ENCODE measurements at regions of chr6 and their contacts with region 1.

Region 1: DNA sequence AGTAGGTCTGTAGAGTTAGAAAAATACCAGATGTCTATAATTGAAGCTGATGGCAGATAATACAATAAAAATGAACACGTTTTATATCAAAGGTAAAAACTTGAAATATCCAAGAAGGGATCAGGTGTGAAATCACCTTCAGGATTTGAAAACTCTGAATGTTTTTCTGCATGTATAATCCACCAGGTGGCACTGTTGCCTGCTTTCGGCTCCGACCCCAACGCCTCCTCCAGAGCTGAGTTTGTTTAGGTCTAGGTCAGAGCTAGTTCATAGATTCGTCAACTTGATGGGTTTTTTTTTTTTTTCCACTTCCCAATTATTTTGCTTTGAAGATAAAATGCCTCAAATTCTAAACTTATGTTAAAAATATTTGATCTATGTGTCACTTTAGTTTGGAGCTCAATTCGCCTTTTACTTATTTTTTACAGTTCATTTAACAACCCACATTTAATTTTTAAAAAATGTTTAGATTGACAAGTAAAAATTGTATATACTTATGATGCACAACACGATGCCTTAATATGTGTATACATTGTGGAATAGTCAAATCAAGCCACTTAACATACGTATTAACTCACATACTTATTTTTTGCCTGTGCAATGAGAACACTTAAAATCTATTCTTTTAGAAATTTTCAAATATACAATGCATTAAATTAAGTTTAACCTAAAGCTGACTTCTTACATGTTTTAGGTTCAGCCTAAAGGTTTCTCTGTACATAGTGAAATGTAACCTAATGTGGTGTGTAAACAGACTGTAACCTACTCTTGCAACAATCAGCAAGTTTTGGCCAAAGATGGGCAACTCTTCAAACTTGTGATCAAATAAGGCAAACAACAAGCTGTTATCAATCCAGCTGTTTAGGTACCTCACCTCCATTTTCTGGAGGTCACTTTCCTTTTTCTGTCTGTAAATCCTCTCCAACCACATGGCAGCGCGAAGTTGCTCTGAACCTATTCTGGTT is 39.4 kb upstream of the ENPP4 start:
- DNase-seq: peak; percentile 24
- H3K4me3 Mint-ChIP-seq: no peak overlapping the region
- H3K27ac Mint-ChIP-seq: no peak overlapping the region
- H3K4me1 Mint-ChIP-seq: peaks cover 1% of the 10 kb centered on the region
- H3K27me3 Mint-ChIP-seq: peaks cover 32% of the 10 kb centered on the region

Region 2: GRCh38 chr6:45930420-45931040 is 159.9 kb before region 1 on chr6:
- intact Hi-C with region 1: loop called (anchors 10 kb)
- DNase-seq: peak; percentile 33
- H3K4me3 Mint-ChIP-seq: no peak overlapping the region
- H3K27ac Mint-ChIP-seq: no peak overlapping the region
- H3K4me1 Mint-ChIP-seq: peaks cover 23% of the 10 kb centered on the region
- H3K27me3 Mint-ChIP-seq: no peaks in the 10 kb centered on the region

Region 3: DNA sequence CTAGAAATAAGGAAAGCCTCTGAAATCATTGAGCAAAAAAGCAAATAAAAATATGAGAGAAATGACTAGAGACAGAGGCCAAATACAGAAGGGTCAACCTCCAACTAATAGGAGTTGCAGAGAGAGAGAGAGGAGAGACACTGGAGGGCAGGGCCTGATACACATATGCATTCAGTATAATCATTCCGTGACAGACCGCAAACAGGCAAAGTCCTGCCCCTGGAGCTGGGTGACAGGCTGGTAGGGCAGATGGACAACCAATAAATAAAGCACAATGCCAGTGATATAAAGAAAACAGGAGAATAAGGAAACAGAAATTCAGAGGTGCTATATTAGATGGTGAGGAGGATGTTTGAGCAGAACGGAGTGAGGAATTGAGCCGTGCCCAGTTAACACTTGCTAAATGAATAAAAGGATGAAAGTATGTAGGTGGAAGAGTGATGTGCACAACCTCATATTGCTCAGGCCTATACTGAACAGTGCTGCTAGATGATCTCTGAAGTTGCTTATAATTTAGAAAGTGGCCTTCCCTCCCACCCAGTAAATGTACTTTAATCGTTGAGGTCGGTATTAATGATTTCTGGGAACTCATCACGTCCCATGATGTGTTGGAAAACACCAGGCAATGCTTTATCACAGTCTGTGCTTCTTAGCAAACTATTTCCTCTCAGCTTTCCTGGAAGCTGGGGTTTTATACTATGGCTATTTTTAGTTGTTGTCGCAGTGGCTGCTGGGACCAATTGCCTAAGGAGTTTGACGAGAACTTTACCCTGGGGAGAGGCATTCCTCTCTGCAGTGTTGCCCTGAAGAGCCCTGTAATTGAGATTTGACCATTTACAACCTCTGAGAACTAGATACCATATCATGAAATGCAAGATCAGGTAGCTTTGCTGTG is 37.1 kb before region 1 on chr6:
- intact Hi-C with region 1: no loop called
- DNase-seq: no peak
- H3K4me3 Mint-ChIP-seq: no peak overlapping the region
- H3K27ac Mint-ChIP-seq: peak overlapping the region; percentile 50
- H3K4me1 Mint-ChIP-seq: peaks cover 14% of the 10 kb centered on the region
- H3K27me3 Mint-ChIP-seq: peaks cover 23% of the 10 kb centered on the region

Region 4: DNA sequence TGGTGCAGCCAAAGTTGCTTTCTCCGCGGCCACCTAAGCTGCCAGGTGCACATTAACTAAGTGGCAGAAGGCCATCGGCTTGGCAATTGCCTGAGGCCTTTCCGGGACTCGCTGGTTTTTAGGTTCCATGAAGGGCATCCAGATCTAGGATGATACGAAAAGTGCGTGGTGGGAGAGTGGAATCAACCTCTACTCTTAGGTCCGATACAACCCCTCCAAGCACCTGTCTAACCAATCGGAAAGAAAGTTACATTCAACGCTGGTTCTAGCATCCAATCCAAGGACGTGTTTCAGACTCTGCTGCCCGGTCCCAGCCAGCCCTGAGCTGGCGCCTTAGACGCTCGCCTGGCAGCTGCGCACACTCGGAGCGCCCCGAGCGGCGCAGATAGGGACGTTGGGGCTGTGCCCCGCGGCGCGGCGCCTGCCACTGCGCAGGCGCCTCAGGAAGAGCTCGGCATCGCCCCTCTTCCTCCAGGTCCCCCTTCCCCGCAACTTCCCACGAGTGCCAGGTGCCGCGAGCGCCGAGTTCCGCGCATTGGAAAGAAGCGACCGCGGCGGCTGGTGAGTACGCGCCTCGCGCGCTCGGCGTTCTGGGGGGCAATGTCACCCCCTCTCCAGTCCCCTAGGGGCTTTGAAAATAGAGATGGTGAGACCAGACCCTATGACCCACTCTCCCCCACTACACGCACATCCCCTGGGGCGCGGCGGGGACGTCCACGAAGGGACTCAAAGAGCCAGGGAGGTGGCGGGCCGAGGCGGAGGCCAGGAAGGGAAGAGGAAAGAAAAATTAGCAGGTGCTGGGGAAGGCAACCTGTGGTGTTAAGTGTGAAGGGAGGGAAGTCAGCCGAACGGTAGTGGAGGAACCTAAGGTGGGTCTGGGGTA is 39.5 kb after region 1 on chr6 and contains the start of gene ENPP4:
- intact Hi-C with region 1: loop called (anchors 2 kb)
- DNase-seq: peak; percentile 88
- H3K4me3 Mint-ChIP-seq: peak within 1 kb of the TSS; percentile 90
- H3K27ac Mint-ChIP-seq: peak within 1 kb of the TSS; percentile 51
- H3K4me1 Mint-ChIP-seq: peaks cover 18% of the 10 kb centered on the region
- H3K27me3 Mint-ChIP-seq: peaks cover 11% of the 10 kb centered on the region
- total RNA-seq, gene ENPP4: 5.4 TPM in 2 replicates

Region 5: DNA sequence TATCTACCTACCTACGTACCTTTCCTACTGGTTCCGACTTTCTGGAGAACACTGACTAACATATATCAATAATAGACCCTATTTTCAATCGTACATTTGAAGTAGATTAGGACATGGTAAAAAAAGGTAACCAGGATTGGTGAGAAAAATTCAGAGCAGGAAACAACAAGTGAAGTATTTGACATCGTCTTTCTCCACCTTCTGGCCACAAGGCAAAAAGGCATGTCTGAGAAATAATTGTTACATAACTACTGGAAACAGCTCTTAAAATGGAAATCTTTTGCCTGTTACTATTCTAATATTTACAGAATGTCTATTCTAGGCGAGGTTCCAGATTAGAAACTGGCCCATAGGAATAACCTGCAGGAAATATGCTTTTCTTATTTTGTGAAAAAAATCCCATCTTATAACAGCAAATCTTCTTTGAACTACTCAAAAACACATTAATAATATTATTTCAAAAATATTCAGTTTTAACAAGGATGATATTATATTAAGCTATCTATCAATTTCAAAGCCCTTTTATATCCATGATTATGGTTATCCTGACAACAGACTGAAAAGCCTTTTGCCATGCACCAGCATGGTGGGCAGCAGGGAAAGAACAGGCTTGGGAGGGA is 320.0 kb after region 1 on chr6:
- intact Hi-C with region 1: loop called (anchors 1 kb)
- DNase-seq: no peak
- H3K4me3 Mint-ChIP-seq: no peak overlapping the region
- H3K27ac Mint-ChIP-seq: no peak overlapping the region
- H3K4me1 Mint-ChIP-seq: no peaks in the 10 kb centered on the region
- H3K27me3 Mint-ChIP-seq: peaks cover 9% of the 10 kb centered on the region

Region 6: GRCh38 chr6:46491628-46492547 is 401.5 kb after region 1 on chr6:
- intact Hi-C with region 1: loop called (anchors 10 kb)
- DNase-seq: no peak
- H3K4me3 Mint-ChIP-seq: peak overlapping the region; percentile 5
- H3K27ac Mint-ChIP-seq: no peak overlapping the region
- H3K4me1 Mint-ChIP-seq: no peaks in the 10 kb centered on the region
- H3K27me3 Mint-ChIP-seq: peaks cover 62% of the 10 kb centered on the region